K562 (cell line): ENCODE measurements at regions of chr1 and their contacts with region 1.

Region 1: GRCh38 chr1:180282401-180283044 is 52.5 kb downstream of the LHX4 start:
- DNase-seq: peak in 1 of 4 experiments; percentile 35
- ATAC-seq: peak; percentile 71
- H3K4me3 ChIP-seq: no peak overlapping the region
- H3K27ac ChIP-seq: no peak overlapping the region
- H3K4me1 ChIP-seq: no peaks in the 10 kb centered on the region
- H3K27me3 ChIP-seq: no peaks in the 10 kb centered on the region
- CTCF ChIP-seq: no peak
- EP300 ChIP-seq: no peak
- POLR2A ChIP-seq: no peak
- RAD21 ChIP-seq: no peak

Region 2: DNA sequence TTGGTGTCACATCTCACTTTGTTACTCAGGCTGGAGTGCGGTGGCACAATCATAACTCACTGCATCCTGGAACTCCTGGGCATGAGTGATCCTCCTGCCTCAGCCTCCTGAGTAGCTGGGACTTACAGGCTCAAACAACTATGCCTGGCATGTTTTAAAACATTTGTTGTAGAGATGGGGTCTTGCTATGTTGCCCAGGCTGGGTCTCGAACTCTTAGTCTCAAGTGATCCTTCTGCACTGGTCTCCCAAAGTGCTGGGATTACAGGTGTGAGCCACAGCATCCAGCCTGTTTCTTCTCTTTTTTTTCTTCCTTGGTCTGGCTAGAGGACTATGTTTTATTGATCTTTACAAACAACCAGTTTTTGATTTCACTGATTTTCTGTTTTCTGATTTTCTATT is 12.2 kb after region 1 on chr1:
- CTCF ChIA-PET with region 1: no interaction called
- POLR2A ChIA-PET with region 1: interaction called, 10 read pairs
- in situ Hi-C with region 1: no loop called
- intact Hi-C with region 1: no loop called
- DNase-seq: no peak
- ATAC-seq: no peak
- H3K4me3 ChIP-seq: no peak overlapping the region
- H3K27ac ChIP-seq: no peak overlapping the region
- H3K4me1 ChIP-seq: peaks cover 2 to 15% of the 10 kb centered on the region in 2 experiments; a peak in 3 of 5 replicates
- H3K27me3 ChIP-seq: no peaks in the 10 kb centered on the region
- CTCF ChIP-seq: no peak
- EP300 ChIP-seq: no peak
- POLR2A ChIP-seq: no peak
- RAD21 ChIP-seq: no peak